H1 (cell line): ENCODE measurements at regions of chr13 and their contacts with region 1.

Region 1: DNA sequence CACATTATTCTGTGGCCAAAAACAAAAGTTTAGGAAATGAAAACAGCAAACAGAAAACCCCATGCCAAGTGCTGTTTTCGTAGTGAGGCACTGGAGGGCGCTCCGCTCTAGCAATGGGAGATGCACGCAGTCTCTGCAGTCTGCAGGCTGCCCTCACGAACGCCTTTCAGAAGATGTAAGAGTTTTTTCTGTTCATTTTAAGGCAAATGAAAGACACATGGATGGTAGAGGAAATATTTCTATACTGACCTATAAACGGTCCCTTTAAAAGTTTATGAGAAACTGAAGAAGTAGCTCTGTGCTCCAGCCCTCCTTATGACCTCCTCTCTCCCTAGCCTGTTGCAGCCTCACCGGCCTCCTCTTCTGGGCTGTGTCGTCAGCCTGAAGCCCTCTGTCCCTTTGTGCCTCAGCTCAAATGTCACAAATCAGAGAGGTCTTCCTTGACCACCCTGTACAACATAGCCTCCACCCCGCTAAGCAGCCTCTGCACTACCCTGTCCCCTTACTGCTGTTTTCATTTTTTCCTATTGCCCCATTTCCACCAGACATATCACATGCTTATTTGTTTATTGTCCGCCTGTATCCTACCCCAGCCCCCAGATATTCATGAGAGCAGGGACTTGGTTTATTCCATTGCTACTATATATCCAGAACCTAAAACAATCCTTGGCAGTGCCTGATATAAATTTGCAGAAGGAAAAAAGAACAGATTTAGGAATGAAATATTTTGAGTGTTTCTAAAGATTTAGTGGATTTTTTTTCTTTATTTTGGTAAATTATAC is 116.4 kb downstream of the TM9SF2 start:
- DNase-seq: peak in 1 of 2 experiments; percentile 73
- H3K4me3 ChIP-seq: no peak overlapping the region
- H3K27ac ChIP-seq: no peak overlapping the region
- H3K4me1 ChIP-seq: peaks cover 0 to 5% (median 0%) of the 10 kb centered on the region in 4 experiments; a peak in 2 of 7 replicates
- H3K27me3 ChIP-seq: no peaks in the 10 kb centered on the region
- CTCF ChIP-seq: peak; percentile 87 to 93 (median 88)
- EP300 ChIP-seq: no peak
- POLR2A ChIP-seq: no peak
- RAD21 ChIP-seq: peak; percentile 99

Region 2: GRCh38 chr13:99600318-99600717 is 17.3 kb before region 1 on chr13:
- CTCF ChIA-PET with region 1: interaction called, 14 read pairs
- POLR2A ChIA-PET with region 1: interaction called, 4 read pairs
- DNase-seq: peak in 1 of 2 experiments; percentile 83
- H3K4me3 ChIP-seq: no peak overlapping the region
- H3K27ac ChIP-seq: no peak overlapping the region
- H3K4me1 ChIP-seq: peaks cover 3 to 9% (median 7%) of the 10 kb centered on the region in 4 experiments; a peak in 4 of 7 replicates
- H3K27me3 ChIP-seq: no peaks in the 10 kb centered on the region
- CTCF ChIP-seq: peak; percentile 83 to 89 (median 88)
- EP300 ChIP-seq: no peak
- POLR2A ChIP-seq: no peak
- RAD21 ChIP-seq: peak; percentile 89 to 92